ENCODE measurements at regions of chr1 and their contacts with region 1.

Region 1: GRCh38 chr1:36088575-36089443 is at the start of gene ADPRS:
- DNase-seq: peak; percentile 95
- ATAC-seq: peak; percentile 88
- H3K4me3 ChIP-seq: peak within 1 kb of the TSS; percentile 79 to 98 (median 84)
- H3K4me3 Mint-ChIP-seq: peak within 1 kb of the TSS; percentile 97
- H3K27ac ChIP-seq: peak within 1 kb of the TSS; percentile 78 to 92
- H3K27ac Mint-ChIP-seq: peak within 1 kb of the TSS; percentile 94
- H3K4me1 ChIP-seq: peaks cover 22 to 28% of the 10 kb centered on the region in 2 donors
- H3K4me1 Mint-ChIP-seq: peaks cover 22% of the 10 kb centered on the region
- H3K27me3 ChIP-seq: peaks cover 0 to 18% (median 9%) of the 10 kb centered on the region in 4 experiments
- H3K27me3 Mint-ChIP-seq: peaks cover 16% of the 10 kb centered on the region
- CTCF ChIP-seq: peak; percentile 97
- total RNA-seq, gene ADPRS: 20.9 and 24.0 TPM in 2 replicates

Region 2: GRCh38 chr1:35930593-35931445 is 158.0 kb before region 1 on chr1 and contains the start of gene AGO3:
- CTCF ChIA-PET with region 1: interaction called, 3 read pairs
- POLR2A ChIA-PET with region 1: no interaction called
- intact Hi-C with region 1: loop called (anchors 1 kb)
- DNase-seq: peak; percentile 95
- ATAC-seq: peak; percentile 86
- H3K4me3 ChIP-seq: peak within 1 kb of the TSS; percentile 71 to 86 (median 80)
- H3K4me3 Mint-ChIP-seq: peak within 1 kb of the TSS; percentile 86
- H3K27ac ChIP-seq: peak within 1 kb of the TSS; percentile 83 to 98
- H3K27ac Mint-ChIP-seq: peak within 1 kb of the TSS; percentile 91
- H3K4me1 ChIP-seq: peaks cover 13 to 14% of the 10 kb centered on the region in 2 donors
- H3K4me1 Mint-ChIP-seq: peaks cover 21% of the 10 kb centered on the region
- H3K27me3 ChIP-seq: no peaks in the 10 kb centered on the region
- H3K27me3 Mint-ChIP-seq: no peaks in the 10 kb centered on the region
- CTCF ChIP-seq: no peak
- total RNA-seq, gene AGO3: 44.9 and 52.5 TPM in 2 replicates